ENCODE measurements at regions of chr22 and their contacts with region 1.

Region 1: DNA sequence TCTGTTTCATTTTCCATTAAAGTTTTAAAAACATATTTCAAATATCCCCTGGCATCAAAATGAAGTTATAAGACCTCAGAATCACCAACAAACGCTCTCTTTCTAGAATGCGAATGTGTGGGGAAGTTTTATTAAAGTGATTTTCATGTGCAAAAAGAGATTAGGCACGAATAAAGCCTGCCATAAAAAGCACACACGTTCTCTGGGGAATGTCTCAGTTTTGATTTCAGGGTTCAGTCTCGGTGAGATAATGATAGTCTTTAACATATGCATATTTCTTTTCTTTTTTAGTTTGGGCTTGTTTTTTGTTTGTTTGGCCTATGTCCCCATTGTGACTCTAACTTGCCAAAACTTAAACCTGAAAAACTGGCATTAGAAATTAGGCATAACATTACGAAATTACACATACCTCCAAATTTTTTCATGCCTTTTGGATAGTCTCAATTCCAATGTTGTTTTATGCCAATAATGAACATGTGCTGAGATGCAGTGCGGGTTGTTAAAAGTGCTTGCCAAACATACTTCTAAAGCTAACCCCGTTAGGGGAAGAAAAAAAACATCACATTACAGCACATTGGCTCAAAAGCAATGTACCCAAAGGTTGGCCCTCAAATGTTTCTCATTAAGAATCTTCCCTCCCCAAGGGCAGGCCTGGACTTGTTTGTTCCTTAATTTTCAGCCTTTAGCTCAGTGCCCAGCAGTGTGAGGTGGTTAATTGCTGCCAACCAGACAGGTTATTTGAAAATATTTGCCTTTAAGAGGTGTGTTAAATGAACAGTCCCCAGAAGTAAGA is 33.2 kb upstream of the FBLN1 start:
- DNase-seq: no peak
- H3K4me3 ChIP-seq: no peak overlapping the region
- CTCF ChIP-seq: no peak

Region 2: DNA sequence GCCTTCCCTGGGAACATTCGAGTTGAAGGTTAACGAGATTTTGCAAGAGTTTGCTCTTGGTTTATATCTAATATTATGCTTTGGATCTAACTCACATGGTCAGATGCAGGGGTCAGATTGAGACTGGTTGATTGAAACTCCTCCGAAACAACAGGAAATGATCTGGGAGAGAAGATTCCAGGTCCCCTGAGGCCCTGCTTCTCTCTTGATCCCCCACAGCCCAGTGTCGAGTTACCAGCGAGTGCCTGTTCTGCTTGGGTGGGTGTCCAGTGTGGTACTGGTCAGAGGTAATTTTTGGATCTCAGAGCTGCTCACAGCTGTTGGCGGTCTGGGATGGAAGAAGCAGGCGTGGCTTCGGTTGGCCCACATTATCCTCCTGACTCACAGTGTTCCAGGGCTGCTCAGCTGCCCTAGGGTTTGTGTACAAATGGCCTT is 42.4 kb after region 1 on chr22:
- in situ Hi-C with region 1: loop called (anchors 5 kb)
- DNase-seq: peak; percentile 80
- H3K4me3 ChIP-seq: no peak overlapping the region
- CTCF ChIP-seq: no peak

Region 3: GRCh38 chr22:45553351-45554039 is 84.0 kb after region 1 on chr22:
- in situ Hi-C with region 1: loop called (anchors 5 kb)
- DNase-seq: peak; percentile 76
- H3K4me3 ChIP-seq: no peak overlapping the region
- CTCF ChIP-seq: peak; percentile 99